ENCODE measurements at regions of chr14 and their contacts with region 1.

Region 1: DNA sequence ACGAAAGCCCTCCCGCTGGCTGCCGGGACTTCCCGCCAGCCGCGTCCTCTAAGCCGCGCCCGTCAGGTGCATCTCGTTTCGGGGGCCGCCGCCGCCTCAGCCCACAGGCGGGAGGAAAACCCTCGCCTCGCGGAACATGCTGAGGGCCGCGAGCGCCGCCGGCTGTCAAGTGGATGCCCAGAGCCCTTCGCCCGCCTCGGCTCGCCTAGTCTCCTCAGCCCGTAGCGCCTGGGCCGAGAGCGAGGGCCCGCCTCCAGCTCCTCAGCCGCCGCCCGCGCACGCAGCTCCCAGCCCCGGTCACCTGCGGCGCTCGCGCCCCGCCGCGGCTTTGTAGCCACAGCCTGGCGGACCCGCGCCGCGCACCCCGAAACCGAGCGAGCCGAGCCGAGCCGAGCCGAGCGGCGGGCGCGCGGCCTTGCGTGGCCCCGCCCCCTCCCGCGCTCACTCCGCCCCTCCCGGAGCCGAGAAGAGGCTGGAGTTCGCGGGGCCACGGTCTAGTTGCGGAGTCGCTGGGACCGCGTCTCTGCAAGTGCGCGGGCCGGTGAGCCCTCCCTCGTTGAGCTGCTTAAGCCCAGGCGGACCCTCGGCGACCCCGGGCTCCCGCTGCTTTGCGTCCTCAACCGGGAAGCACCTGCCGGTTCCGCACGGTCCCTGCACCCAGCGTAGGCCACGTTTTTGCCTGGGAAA is at the start of gene EML5:
- DNase-seq: peak; percentile 79
- H3K4me3 Mint-ChIP-seq: peak within 1 kb of the TSS; percentile 70
- H3K27ac Mint-ChIP-seq: no peak within 1 kb of the TSS
- H3K4me1 Mint-ChIP-seq: no peaks in the 10 kb centered on the region
- H3K27me3 Mint-ChIP-seq: no peaks in the 10 kb centered on the region
- CTCF ChIP-seq: peak; percentile 3
- total RNA-seq, gene EML5: 0.37 and 0.54 TPM in 2 replicates

Region 2: GRCh38 chr14:88682495-88683114 is 110.1 kb before region 1 on chr14:
- CTCF ChIA-PET with region 1: interaction called, 11 read pairs
- POLR2A ChIA-PET with region 1: interaction called, 3 read pairs
- intact Hi-C with region 1: no loop called
- DNase-seq: no peak
- H3K4me3 Mint-ChIP-seq: no peak overlapping the region
- H3K27ac Mint-ChIP-seq: no peak overlapping the region
- H3K4me1 Mint-ChIP-seq: no peaks in the 10 kb centered on the region
- H3K27me3 Mint-ChIP-seq: no peaks in the 10 kb centered on the region
- CTCF ChIP-seq: no peak

Region 3: DNA sequence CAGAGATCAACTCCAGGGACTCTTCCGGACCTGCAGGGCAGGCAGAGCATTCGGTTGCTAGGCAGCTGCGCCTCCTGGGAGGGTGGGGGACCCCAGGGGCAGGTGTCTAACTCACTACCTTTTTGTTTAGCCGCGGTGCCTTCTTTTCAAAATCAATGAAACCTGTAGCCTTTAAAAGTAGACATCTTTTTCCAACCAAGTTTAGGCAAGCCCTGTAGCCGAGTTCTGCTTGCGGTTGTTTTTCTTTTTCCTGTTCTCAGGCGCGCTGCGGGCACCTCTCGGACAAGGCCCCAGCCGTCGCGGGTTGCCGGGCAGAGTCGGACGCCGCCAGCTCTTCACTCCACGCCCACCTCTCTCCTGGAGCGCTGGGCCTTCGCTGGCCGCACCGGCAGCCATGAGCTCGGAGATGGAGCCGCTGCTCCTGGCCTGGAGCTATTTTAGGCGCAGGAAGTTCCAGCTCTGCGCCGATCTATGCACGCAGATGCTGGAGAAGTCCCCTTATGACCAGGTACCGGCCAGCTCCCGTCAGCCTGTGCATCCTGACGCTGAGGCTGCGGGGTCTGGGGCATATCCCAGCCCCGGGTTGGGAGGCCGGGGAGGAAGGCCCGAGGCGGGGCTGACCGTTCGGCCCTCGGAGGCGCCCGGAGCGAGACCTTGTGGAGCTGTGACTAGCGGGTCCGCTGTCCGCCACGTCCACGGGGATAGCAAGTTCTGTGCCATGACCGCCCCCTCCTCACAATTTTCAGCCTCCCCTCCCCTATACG is 31.8 kb after region 1 on chr14 and contains the start of gene TTC8:
- CTCF ChIA-PET with region 1: interaction called, 12 read pairs
- POLR2A ChIA-PET with region 1: interaction called, 50 read pairs
- intact Hi-C with region 1: no loop called
- DNase-seq: peak; percentile 87
- H3K4me3 Mint-ChIP-seq: peak within 1 kb of the TSS; percentile 72
- H3K27ac Mint-ChIP-seq: peak within 1 kb of the TSS; percentile 100
- H3K4me1 Mint-ChIP-seq: peaks cover 8% of the 10 kb centered on the region
- H3K27me3 Mint-ChIP-seq: no peaks in the 10 kb centered on the region
- CTCF ChIP-seq: no peak
- total RNA-seq, gene TTC8: 20.9 and 23.9 TPM in 2 replicates

Region 4: GRCh38 chr14:88868558-88869159 is 75.9 kb after region 1 on chr14:
- CTCF ChIA-PET with region 1: interaction called, 5 read pairs
- POLR2A ChIA-PET with region 1: no interaction called
- intact Hi-C with region 1: loop called (anchors 1 kb)
- DNase-seq: peak; percentile 51
- H3K4me3 Mint-ChIP-seq: no peak overlapping the region
- H3K27ac Mint-ChIP-seq: no peak overlapping the region
- H3K4me1 Mint-ChIP-seq: no peaks in the 10 kb centered on the region
- H3K27me3 Mint-ChIP-seq: no peaks in the 10 kb centered on the region
- CTCF ChIP-seq: peak; percentile 61

Region 5: DNA sequence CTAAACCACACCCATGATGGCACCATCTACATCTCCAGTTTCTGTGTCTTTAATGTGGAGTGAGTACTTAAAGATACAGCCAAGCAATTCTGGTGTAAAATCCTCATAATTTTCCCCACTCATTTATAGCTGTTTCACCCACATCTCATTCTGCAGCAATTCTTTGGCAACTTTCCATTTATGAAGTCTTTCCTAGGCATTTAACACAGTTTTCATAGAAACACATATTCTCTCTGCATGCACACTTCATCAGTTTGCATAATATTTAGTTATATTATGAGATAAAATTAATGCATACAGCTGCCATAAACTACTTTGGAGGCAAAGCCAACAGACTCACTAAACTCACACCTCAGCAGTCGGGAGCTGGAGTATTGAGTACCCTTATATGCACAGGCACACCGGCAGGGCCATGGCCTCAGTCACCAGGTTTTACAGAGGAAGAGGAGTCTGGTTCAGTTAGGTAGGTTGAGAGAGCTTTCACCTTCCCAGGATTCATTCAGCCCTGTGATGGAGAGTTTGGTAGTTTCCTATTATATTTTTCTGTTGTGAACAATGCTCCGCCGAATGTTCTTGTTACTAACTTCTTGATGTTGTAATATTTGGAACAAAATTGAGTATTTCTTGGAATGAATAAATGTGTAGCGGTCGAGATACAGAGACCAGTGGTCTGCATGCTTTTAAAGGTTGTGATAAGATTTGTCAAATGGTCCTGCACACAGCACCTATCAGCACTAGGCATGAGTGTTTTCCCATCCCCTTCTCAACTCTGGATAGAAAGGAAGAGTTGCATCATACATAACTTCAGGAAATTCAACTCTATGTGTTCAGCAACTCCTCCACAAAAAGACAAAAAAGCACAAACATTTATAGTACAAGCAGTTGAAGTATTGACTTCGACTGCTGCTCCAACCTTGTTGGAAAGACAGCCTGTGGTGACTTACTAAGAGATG is 155.2 kb after region 1 on chr14:
- CTCF ChIA-PET with region 1: no interaction called
- POLR2A ChIA-PET with region 1: no interaction called
- intact Hi-C with region 1: no loop called
- DNase-seq: no peak
- H3K4me3 Mint-ChIP-seq: no peak overlapping the region
- H3K27ac Mint-ChIP-seq: no peak overlapping the region
- H3K4me1 Mint-ChIP-seq: no peaks in the 10 kb centered on the region
- H3K27me3 Mint-ChIP-seq: no peaks in the 10 kb centered on the region
- CTCF ChIP-seq: no peak

Region 6: GRCh38 chr14:89000007-89000942 is 207.6 kb after region 1 on chr14:
- CTCF ChIA-PET with region 1: no interaction called
- POLR2A ChIA-PET with region 1: no interaction called
- intact Hi-C with region 1: loop called (anchors 2 kb)
- DNase-seq: peak; percentile 95
- H3K4me3 Mint-ChIP-seq: no peak overlapping the region
- H3K27ac Mint-ChIP-seq: peak overlapping the region; percentile 64
- H3K4me1 Mint-ChIP-seq: peaks cover 24% of the 10 kb centered on the region
- H3K27me3 Mint-ChIP-seq: no peaks in the 10 kb centered on the region
- CTCF ChIP-seq: no peak